Activated T-helper 2 cell treated with anti-CD3 and anti-CD28 coated beads, Interferon-gamma antibody, Interleukin-2, Interleukin-4, amounts not matched to agents 10 μg/mL and 5 μg/mL and 100 μg/mL, durations not matched to agents 14 hours and 24 hours and 36 hours (primary cell): ENCODE measurements at regions of chr7 and their contacts with region 1.

Region 1: GRCh38 chr7:137001041-137001440 is 132.6 kb downstream of the CHRM2 start:
- DNase-seq: no peak
- H3K4me3 Mint-ChIP-seq: no peak overlapping the region
- H3K27ac Mint-ChIP-seq: no peak overlapping the region
- H3K4me1 Mint-ChIP-seq: no peaks in the 10 kb centered on the region
- H3K27me3 Mint-ChIP-seq: no peaks in the 10 kb centered on the region

Region 2: GRCh38 chr7:136802987-136803386 is 198.1 kb before region 1 on chr7:
- intact Hi-C with region 1: no loop called
- DNase-seq: no peak
- H3K4me3 Mint-ChIP-seq: no peak overlapping the region
- H3K27ac Mint-ChIP-seq: no peak overlapping the region
- H3K4me1 Mint-ChIP-seq: no peaks in the 10 kb centered on the region
- H3K27me3 Mint-ChIP-seq: no peaks in the 10 kb centered on the region

Region 3: GRCh38 chr7:136956232-136956631 is 44.8 kb before region 1 on chr7:
- intact Hi-C with region 1: loop called (anchors 2 kb)
- DNase-seq: no peak
- H3K4me3 Mint-ChIP-seq: no peak overlapping the region
- H3K27ac Mint-ChIP-seq: no peak overlapping the region
- H3K4me1 Mint-ChIP-seq: no peaks in the 10 kb centered on the region
- H3K27me3 Mint-ChIP-seq: no peaks in the 10 kb centered on the region

Region 4: GRCh38 chr7:137091396-137091795 is 90.4 kb after region 1 on chr7:
- intact Hi-C with region 1: no loop called
- DNase-seq: no peak
- H3K4me3 Mint-ChIP-seq: no peak overlapping the region
- H3K27ac Mint-ChIP-seq: no peak overlapping the region
- H3K4me1 Mint-ChIP-seq: no peaks in the 10 kb centered on the region
- H3K27me3 Mint-ChIP-seq: no peaks in the 10 kb centered on the region